ENCODE measurements at regions of chr2 and their contacts with region 1.

Region 1: GRCh38 chr2:181457121-181457740 is at the start of gene ITGA4:
- DNase-seq: peak; percentile 82
- H3K4me3 ChIP-seq: peak within 1 kb of the TSS; percentile 56
- H3K27ac ChIP-seq: no peak within 1 kb of the TSS
- H3K4me1 ChIP-seq: no peaks in the 10 kb centered on the region
- H3K27me3 ChIP-seq: peaks cover 7% of the 10 kb centered on the region
- CTCF ChIP-seq: peak; percentile 76
- total RNA-seq, gene ITGA4: 4.6 and 7.0 TPM in 2 replicates

Region 2: DNA sequence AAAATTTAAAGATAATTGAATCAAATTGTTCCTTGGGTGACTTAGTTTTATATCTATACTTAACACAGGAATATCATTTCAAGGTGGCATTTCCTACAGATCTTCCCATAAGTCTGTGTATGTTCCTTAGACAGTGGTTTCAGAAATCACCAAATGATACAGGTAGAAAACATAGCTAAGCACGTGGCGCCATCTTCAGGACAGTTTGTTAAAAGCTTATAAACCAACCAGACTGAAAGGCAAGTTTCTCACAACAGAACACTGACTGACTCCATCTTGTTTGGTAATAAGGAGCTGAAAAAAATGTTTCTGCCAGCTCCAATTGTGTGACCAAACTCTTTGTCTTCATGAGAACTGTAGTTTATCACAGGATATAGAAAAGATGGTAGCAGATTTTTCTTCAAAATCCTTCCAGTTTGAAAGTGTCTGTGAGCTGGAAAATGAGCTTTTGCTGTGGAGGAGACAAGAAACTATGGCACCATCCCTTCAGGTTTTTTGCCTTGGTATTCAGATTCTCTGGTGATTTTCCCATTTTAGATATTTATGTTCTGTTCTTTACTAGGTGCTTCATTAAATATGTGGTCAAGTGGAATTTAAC is 257.9 kb after region 1 on chr2:
- CTCF ChIA-PET with region 1: interaction called, 9 read pairs
- POLR2A ChIA-PET with region 1: no interaction called
- intact Hi-C with region 1: loop called (anchors 10 kb)
- DNase-seq: peak; percentile 85
- H3K4me3 ChIP-seq: no peak overlapping the region
- H3K27ac ChIP-seq: no peak overlapping the region
- H3K4me1 ChIP-seq: no peaks in the 10 kb centered on the region
- H3K27me3 ChIP-seq: no peaks in the 10 kb centered on the region
- CTCF ChIP-seq: peak; percentile 81